ENCODE measurements at regions of chr12 and their contacts with region 1.

Region 1: GRCh38 chr12:96399919-96400797 is at the start of gene CDK17:
- DNase-seq: peak; percentile 90
- H3K4me3 Mint-ChIP-seq: peak within 1 kb of the TSS; percentile 94
- H3K27ac Mint-ChIP-seq: peak within 1 kb of the TSS; percentile 94
- H3K4me1 Mint-ChIP-seq: peaks cover 48% of the 10 kb centered on the region
- H3K27me3 Mint-ChIP-seq: no peaks in the 10 kb centered on the region
- total RNA-seq, gene CDK17: 41.5 to 42.5 TPM

Region 2: DNA sequence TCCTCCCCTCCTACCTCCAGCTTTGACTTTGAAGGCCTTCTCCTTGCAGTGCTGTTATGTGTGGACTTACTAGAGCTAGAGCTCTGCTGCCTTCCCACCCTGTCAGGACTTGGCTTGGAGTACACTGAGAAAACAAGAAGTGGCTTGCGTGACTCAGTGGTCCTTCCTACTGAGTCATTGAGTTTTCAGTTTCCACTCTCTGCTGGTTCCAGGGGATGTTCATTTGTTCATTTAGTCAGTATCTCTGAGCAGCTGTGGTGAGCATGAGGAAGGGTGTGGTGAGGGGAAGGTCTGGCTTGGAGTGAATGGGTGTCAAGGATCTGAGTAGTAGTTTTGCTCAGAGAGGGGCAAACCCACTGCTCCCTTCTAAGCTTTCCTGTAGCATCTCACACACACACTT is 223.1 kb before region 1 on chr12:
- CTCF ChIA-PET with region 1: interaction called, 3 read pairs
- POLR2A ChIA-PET with region 1: interaction called, 11 read pairs
- DNase-seq: peak; percentile 84
- H3K4me3 Mint-ChIP-seq: peak overlapping the region; percentile 44
- H3K27ac Mint-ChIP-seq: peak overlapping the region; percentile 93
- H3K4me1 Mint-ChIP-seq: peaks cover 34% of the 10 kb centered on the region
- H3K27me3 Mint-ChIP-seq: no peaks in the 10 kb centered on the region

Region 3: GRCh38 chr12:96215919-96216273 is 184.3 kb before region 1 on chr12:
- CTCF ChIA-PET with region 1: interaction called, 40 read pairs
- POLR2A ChIA-PET with region 1: interaction called, 52 read pairs
- DNase-seq: no peak
- H3K4me3 Mint-ChIP-seq: no peak overlapping the region
- H3K27ac Mint-ChIP-seq: no peak overlapping the region
- H3K4me1 Mint-ChIP-seq: peaks cover 51% of the 10 kb centered on the region
- H3K27me3 Mint-ChIP-seq: no peaks in the 10 kb centered on the region

Region 4: GRCh38 chr12:96347130-96347699 is 52.9 kb before region 1 on chr12:
- CTCF ChIA-PET with region 1: interaction called, 9 read pairs
- POLR2A ChIA-PET with region 1: interaction called, 14 read pairs
- DNase-seq: no peak
- H3K4me3 Mint-ChIP-seq: no peak overlapping the region
- H3K27ac Mint-ChIP-seq: peak overlapping the region; percentile 14
- H3K4me1 Mint-ChIP-seq: peaks cover 62% of the 10 kb centered on the region
- H3K27me3 Mint-ChIP-seq: no peaks in the 10 kb centered on the region

Region 5: GRCh38 chr12:96365604-96366380 is 34.4 kb before region 1 on chr12:
- CTCF ChIA-PET with region 1: no interaction called
- POLR2A ChIA-PET with region 1: no interaction called
- DNase-seq: no peak
- H3K4me3 Mint-ChIP-seq: no peak overlapping the region
- H3K27ac Mint-ChIP-seq: no peak overlapping the region
- H3K4me1 Mint-ChIP-seq: peaks cover 30% of the 10 kb centered on the region
- H3K27me3 Mint-ChIP-seq: no peaks in the 10 kb centered on the region

Region 6: GRCh38 chr12:96419576-96420271 is 19.6 kb after region 1 on chr12:
- CTCF ChIA-PET with region 1: interaction called, 5 read pairs
- POLR2A ChIA-PET with region 1: interaction called, 27 read pairs
- DNase-seq: no peak
- H3K4me3 Mint-ChIP-seq: no peak overlapping the region
- H3K27ac Mint-ChIP-seq: no peak overlapping the region
- H3K4me1 Mint-ChIP-seq: peaks cover 54% of the 10 kb centered on the region
- H3K27me3 Mint-ChIP-seq: peaks cover 6% of the 10 kb centered on the region

Region 7: GRCh38 chr12:96489103-96490056 is 89.2 kb after region 1 on chr12 and contains the start of gene CFAP54:
- CTCF ChIA-PET with region 1: interaction called, 69 read pairs
- POLR2A ChIA-PET with region 1: interaction called, 21 read pairs
- DNase-seq: peak; percentile 96
- H3K4me3 Mint-ChIP-seq: peak within 1 kb of the TSS; percentile 80
- H3K27ac Mint-ChIP-seq: peak within 1 kb of the TSS; percentile 7
- H3K4me1 Mint-ChIP-seq: peaks cover 49% of the 10 kb centered on the region
- H3K27me3 Mint-ChIP-seq: peaks cover 16% of the 10 kb centered on the region
- total RNA-seq, gene CFAP54: 0.55 to 0.75 TPM

Region 8: GRCh38 chr12:96516472-96517430 is 116.6 kb after region 1 on chr12:
- CTCF ChIA-PET with region 1: interaction called, 111 read pairs
- POLR2A ChIA-PET with region 1: interaction called, 47 read pairs
- DNase-seq: peak; percentile 92
- H3K4me3 Mint-ChIP-seq: peak overlapping the region; percentile 24
- H3K27ac Mint-ChIP-seq: peak overlapping the region; percentile 74
- H3K4me1 Mint-ChIP-seq: peaks cover 21% of the 10 kb centered on the region
- H3K27me3 Mint-ChIP-seq: peaks cover 2% of the 10 kb centered on the region

Region 9: DNA sequence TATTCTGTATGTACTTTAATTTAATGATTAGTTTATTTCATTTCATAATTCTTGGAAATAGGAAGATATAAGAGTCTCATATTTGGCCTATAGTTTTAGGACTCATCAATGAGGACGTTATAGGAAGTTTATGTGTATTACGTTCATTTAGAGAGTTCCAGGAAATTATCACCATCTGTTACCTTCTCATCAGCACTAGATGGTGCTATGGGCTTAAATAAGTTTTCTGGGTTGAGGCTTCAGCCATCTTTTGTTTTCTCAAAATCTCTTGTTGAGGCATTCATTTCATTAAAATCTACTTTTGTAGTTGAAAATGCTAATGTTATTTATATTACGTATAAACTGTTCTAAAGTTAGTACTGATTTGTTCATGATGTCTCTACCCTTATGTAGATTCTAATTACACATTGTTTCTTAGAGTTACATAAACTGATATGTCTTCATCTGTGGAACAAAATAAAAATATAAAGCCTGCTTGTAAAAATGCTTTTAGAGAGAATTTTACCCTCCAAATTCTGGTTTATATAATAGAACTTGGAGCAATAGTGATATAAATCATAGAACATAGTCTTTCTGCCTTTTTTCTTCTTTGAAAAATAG is 178.5 kb after region 1 on chr12:
- CTCF ChIA-PET with region 1: no interaction called
- POLR2A ChIA-PET with region 1: no interaction called
- DNase-seq: no peak
- H3K4me3 Mint-ChIP-seq: no peak overlapping the region
- H3K27ac Mint-ChIP-seq: no peak overlapping the region
- H3K4me1 Mint-ChIP-seq: no peaks in the 10 kb centered on the region
- H3K27me3 Mint-ChIP-seq: peaks cover 4% of the 10 kb centered on the region

Measured in activated CD4-positive, alpha-beta memory T cell treated with anti-CD3 and anti-CD28 coated beads, Interleukin-2, amount 10 ng/mL, durations not matched to agents 7 days and 5 days (primary cell).